ENCODE measurements at regions of chr4 and their contacts with region 1.

Region 1: GRCh38 chr4:107736924-107737448 is 17.0 kb upstream of the PAPSS1 start:
- DNase-seq: peak; percentile 18
- ATAC-seq: peak; percentile 64
- H3K4me3 Mint-ChIP-seq: no peak overlapping the region
- H3K27ac Mint-ChIP-seq: no peak overlapping the region
- H3K4me1 Mint-ChIP-seq: no peaks in the 10 kb centered on the region
- H3K27me3 Mint-ChIP-seq: no peaks in the 10 kb centered on the region
- CTCF ChIP-seq: peak; percentile 57

Region 2: GRCh38 chr4:106369456-106370060 is 1367.4 kb before region 1 on chr4:
- CTCF ChIA-PET with region 1: interaction called, 4 read pairs
- POLR2A ChIA-PET with region 1: no interaction called
- intact Hi-C with region 1: loop called (anchors 1 kb)
- DNase-seq: no peak
- ATAC-seq: no peak
- H3K4me3 Mint-ChIP-seq: no peak overlapping the region
- H3K27ac Mint-ChIP-seq: no peak overlapping the region
- H3K4me1 Mint-ChIP-seq: no peaks in the 10 kb centered on the region
- H3K27me3 Mint-ChIP-seq: peaks cover 10% of the 10 kb centered on the region
- CTCF ChIP-seq: no peak

Region 3: GRCh38 chr4:107183155-107183774 is 553.7 kb before region 1 on chr4:
- CTCF ChIA-PET with region 1: interaction called, 5 read pairs
- POLR2A ChIA-PET with region 1: no interaction called
- intact Hi-C with region 1: loop called (anchors 2 kb)
- DNase-seq: no peak
- ATAC-seq: peak; percentile 65
- H3K4me3 Mint-ChIP-seq: no peak overlapping the region
- H3K27ac Mint-ChIP-seq: no peak overlapping the region
- H3K4me1 Mint-ChIP-seq: no peaks in the 10 kb centered on the region
- H3K27me3 Mint-ChIP-seq: peaks cover 3% of the 10 kb centered on the region
- CTCF ChIP-seq: no peak

Region 4: DNA sequence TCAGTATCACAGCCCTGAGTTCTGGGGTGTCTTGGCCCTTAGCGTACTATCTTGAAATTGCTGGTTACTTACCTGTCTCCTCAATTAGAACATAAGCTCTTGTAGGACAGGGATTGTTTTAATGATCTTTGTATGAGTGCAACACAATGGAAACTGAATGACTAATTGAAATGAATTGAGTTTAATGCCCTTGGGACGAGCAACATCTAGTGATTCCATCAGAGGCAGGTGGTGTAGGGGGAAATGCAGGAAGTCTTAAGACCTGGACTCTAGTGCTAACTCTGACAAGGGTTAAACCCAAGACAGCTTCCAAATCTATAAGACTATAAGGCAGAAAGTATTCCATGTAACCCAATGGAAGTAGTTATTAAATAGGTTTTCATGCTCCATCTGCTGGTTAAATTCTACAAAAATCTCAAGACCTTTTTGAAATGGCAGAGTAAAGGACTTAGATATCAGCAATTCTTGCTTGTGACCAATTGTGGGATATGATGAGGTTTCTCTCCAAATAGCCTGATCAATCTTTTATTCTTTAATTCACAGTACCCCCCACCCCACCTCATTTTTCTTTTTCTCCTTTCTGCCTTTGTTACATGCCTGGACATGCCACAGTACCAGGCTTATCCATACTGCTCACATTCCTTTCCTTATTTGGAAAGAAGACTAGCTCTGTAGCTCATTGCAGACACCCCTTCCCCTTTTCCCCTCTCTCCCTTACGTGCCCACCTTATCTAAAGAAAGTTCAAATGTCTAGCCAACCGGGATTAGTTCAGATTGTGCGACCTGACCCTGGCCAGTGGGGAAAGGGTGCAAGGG is 357.7 kb before region 1 on chr4:
- CTCF ChIA-PET with region 1: no interaction called
- POLR2A ChIA-PET with region 1: no interaction called
- intact Hi-C with region 1: loop called (anchors 10 kb)
- DNase-seq: no peak
- ATAC-seq: no peak
- H3K4me3 Mint-ChIP-seq: no peak overlapping the region
- H3K27ac Mint-ChIP-seq: no peak overlapping the region
- H3K4me1 Mint-ChIP-seq: no peaks in the 10 kb centered on the region
- H3K27me3 Mint-ChIP-seq: no peaks in the 10 kb centered on the region
- CTCF ChIP-seq: no peak

Region 5: GRCh38 chr4:107719922-107720722 is 16.9 kb before region 1 on chr4 and contains the start of gene PAPSS1:
- CTCF ChIA-PET with region 1: interaction called, 4 read pairs
- POLR2A ChIA-PET with region 1: no interaction called
- intact Hi-C with region 1: loop called (anchors 1 kb)
- DNase-seq: peak; percentile 92
- ATAC-seq: peak; percentile 87
- H3K4me3 Mint-ChIP-seq: peak within 1 kb of the TSS; percentile 97
- H3K27ac Mint-ChIP-seq: peak within 1 kb of the TSS; percentile 96
- H3K4me1 Mint-ChIP-seq: peaks cover 34% of the 10 kb centered on the region
- H3K27me3 Mint-ChIP-seq: no peaks in the 10 kb centered on the region
- CTCF ChIP-seq: no peak
- total RNA-seq, gene PAPSS1: 31.8 and 34.2 TPM in 2 replicates

Region 6: GRCh38 chr4:107951551-107951950 is 214.6 kb after region 1 on chr4:
- CTCF ChIA-PET with region 1: no interaction called
- POLR2A ChIA-PET with region 1: no interaction called
- intact Hi-C with region 1: no loop called
- DNase-seq: no peak
- ATAC-seq: no peak
- H3K4me3 Mint-ChIP-seq: no peak overlapping the region
- H3K27ac Mint-ChIP-seq: no peak overlapping the region
- H3K4me1 Mint-ChIP-seq: no peaks in the 10 kb centered on the region
- H3K27me3 Mint-ChIP-seq: no peaks in the 10 kb centered on the region
- CTCF ChIP-seq: no peak

Region 7: DNA sequence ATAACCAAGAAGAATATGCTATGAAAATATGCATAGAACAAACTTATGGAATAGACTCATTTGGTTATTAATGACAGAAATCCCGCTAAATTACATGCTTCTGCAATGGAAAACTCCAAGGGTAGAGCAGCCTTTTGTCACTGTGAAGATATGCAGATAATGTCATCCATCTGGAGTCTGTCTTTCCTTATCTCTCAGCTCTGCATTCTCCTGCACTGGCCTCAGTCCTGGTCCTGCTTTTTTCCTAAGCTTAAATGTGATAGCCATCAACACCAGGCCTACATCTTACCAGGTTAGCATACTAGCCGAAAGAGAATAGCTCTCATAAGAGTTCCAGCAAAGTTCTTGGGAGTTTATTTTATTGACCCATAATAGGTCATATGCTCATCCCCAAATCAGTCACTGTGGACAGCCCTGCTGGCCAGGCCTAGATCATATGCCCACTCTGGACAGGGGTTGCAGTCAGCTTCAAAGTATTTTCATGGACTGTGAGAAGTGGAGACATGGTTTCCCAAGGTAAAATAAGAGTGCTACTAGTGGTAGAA is 518.3 kb after region 1 on chr4:
- CTCF ChIA-PET with region 1: no interaction called
- POLR2A ChIA-PET with region 1: no interaction called
- intact Hi-C with region 1: no loop called
- DNase-seq: no peak
- ATAC-seq: no peak
- H3K4me3 Mint-ChIP-seq: no peak overlapping the region
- H3K27ac Mint-ChIP-seq: no peak overlapping the region
- H3K4me1 Mint-ChIP-seq: no peaks in the 10 kb centered on the region
- H3K27me3 Mint-ChIP-seq: no peaks in the 10 kb centered on the region
- CTCF ChIP-seq: no peak

Measured in activated B cell treated with CpG ODN at 0.5 μM for 24 hours (primary cell).